OCI-LY7 (cell line): ENCODE measurements at regions of chr3 and their contacts with region 1.

Region 1: GRCh38 chr3:58177747-58178527 is 32.8 kb downstream of the DNASE1L3 start:
- DNase-seq: peak; percentile 85
- H3K4me3 ChIP-seq: peak overlapping the region; percentile 53
- H3K27ac ChIP-seq: no peak overlapping the region
- H3K4me1 ChIP-seq: peaks cover 15% of the 10 kb centered on the region
- CTCF ChIP-seq: peak; percentile 88

Region 2: GRCh38 chr3:58008140-58009025 is 169.6 kb before region 1 on chr3 and contains the start of gene FLNB:
- CTCF ChIA-PET with region 1: no interaction called
- POLR2A ChIA-PET with region 1: no interaction called
- intact Hi-C with region 1: loop called (anchors 2 kb)
- DNase-seq: peak; percentile 87
- H3K4me3 ChIP-seq: peak within 1 kb of the TSS; percentile 82
- H3K27ac ChIP-seq: peak within 1 kb of the TSS; percentile 17
- H3K4me1 ChIP-seq: peaks cover 19% of the 10 kb centered on the region
- CTCF ChIP-seq: peak; percentile 75
- total RNA-seq, gene FLNB: 29.5 and 29.9 TPM in 2 replicates

Region 3: DNA sequence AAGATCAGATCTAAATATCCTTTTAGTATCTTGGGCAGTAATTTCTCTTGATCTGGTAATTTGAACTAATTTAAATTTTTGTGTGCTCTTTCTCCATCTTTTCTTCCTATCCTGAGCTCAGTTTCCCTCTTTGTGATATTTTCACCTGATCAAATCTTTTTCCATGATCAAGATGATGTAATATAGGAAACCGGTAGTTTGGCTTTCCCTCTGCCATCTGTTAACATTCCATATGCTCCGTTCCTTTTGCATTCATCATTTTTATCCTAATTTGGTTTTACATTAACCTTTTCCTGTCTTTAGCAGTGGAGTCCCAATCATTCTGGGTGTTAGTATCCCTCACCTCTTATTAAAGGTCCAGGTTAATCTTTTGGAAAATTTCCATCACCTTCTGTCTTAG is 53.7 kb after region 1 on chr3:
- CTCF ChIA-PET with region 1: interaction called, 11 read pairs
- POLR2A ChIA-PET with region 1: interaction called, 3 read pairs
- intact Hi-C with region 1: no loop called
- DNase-seq: no peak
- H3K4me3 ChIP-seq: no peak overlapping the region
- H3K27ac ChIP-seq: no peak overlapping the region
- H3K4me1 ChIP-seq: peaks cover 13% of the 10 kb centered on the region
- CTCF ChIP-seq: no peak

Region 4: DNA sequence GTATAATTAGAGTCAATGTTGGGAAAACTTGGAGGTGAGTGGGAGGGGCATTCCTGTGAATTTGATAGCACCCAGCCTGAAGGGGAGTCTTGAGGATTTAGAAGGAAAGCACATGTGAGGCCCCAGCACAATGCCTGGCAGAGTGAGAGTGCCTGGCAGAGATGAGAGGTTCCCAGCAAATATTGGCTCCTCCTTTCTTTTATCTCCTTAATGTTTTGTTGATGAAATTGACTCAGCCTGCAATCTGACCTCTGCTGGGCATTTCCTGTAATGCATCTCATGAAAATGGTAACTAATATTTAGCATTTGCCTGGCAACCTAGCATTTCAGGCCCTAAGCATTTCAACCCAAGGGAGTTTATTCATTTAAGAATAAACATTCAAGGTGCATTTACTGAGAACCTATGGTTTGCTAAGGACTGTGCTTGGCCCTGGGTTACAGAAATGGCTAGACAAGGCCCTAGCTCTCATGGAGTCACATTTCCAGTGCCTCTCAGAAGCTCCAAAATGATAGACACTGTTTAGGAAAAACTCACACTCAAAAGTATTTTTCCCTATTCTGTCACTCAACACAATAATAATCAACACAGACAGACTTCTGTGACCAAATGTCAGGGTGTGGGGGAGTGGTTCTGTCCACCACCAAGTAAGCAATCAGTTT is 236.7 kb after region 1 on chr3:
- CTCF ChIA-PET with region 1: no interaction called
- POLR2A ChIA-PET with region 1: no interaction called
- intact Hi-C with region 1: loop called (anchors 10 kb)
- DNase-seq: peak; percentile 76
- H3K4me3 ChIP-seq: no peak overlapping the region
- H3K27ac ChIP-seq: no peak overlapping the region
- H3K4me1 ChIP-seq: peaks cover 11% of the 10 kb centered on the region
- CTCF ChIP-seq: peak; percentile 88